MCF 10A (cell line): ENCODE measurements at regions of chr12 and their contacts with region 1.

Region 1: DNA sequence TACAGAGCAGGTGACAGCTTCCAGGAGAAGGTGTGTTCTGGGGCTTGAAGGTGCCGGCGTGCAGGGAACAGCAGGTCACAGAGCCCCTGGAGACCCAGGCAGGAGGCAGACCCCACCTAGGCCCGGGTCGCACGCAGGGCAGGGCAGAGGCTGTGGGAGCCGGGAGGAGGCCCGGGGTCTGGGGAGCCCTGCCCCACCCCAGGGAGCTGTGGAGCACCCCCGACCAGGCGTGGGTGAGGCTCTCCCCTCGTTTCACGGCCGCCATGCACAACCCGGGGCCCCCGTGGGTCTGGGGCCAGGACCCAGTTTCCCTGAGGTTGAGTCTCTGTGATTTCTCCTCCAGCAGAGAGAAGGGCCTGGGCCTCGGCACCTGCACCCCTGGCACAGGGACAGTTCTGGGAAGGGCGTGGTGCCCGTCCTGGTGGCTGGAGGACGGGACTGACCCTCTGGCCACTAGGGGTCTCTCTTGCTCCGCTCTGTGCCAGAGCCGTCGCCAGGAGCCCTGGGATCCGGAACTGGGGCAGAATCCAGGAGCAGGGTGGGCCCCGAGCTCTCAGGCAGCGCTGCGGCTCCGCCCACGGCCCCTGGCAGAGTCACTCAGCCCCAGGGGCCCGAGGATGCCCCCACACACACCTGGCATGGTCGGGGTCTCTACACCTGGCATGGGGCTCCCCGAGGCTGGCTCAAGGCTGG is 75.2 kb upstream of the FBRSL1 start:
- DNase-seq: peak; percentile 82
- H3K4me3 Mint-ChIP-seq: no peak overlapping the region
- H3K27ac Mint-ChIP-seq: no peak overlapping the region
- H3K4me1 Mint-ChIP-seq: no peaks in the 10 kb centered on the region
- H3K27me3 Mint-ChIP-seq: peaks cover 25% of the 10 kb centered on the region
- CTCF ChIP-seq: peak; percentile 90

Region 2: GRCh38 chr12:132153501-132154340 is 261.1 kb before region 1 on chr12:
- CTCF ChIA-PET with region 1: interaction called, 3 read pairs
- POLR2A ChIA-PET with region 1: no interaction called
- intact Hi-C with region 1: loop called (anchors 2 kb)
- DNase-seq: peak; percentile 71
- H3K4me3 Mint-ChIP-seq: no peak overlapping the region
- H3K27ac Mint-ChIP-seq: no peak overlapping the region
- H3K4me1 Mint-ChIP-seq: no peaks in the 10 kb centered on the region
- H3K27me3 Mint-ChIP-seq: no peaks in the 10 kb centered on the region
- CTCF ChIP-seq: peak; percentile 87

Region 3: DNA sequence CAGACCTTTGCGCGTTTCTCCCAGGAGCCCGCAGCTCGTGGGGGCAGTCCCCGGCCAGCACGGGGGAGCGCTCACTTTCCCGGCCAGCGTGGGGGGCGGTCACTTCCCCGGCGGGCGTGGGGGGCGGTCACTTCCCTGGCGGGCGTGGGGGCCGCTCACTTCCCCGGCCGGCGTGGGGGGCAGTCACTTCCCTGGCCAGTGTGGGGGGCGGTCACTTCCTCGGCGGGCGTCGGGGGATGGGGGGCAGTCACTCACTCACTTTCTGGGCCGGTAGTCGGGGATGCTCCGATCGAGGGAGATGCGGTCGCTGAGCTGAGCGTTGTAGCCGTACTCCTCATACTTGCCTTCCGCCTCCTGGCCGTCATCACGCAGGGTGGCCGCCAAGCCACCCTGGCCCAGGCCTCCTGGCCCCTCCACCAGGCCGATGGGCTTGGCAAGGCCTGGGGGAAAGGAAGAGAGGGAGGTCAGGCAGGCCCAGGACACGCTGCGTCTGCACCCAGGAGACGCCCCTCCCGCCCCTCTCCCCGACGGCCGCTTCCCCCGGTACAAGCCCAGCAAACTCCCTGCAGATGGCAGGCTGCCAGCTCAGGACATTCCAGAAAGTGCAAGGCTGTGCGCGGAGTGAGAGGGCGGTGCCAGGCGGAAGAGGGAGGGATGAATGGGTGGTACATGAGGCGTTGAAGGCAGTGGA is 128.6 kb before region 1 on chr12:
- CTCF ChIA-PET with region 1: interaction called, 5 read pairs
- POLR2A ChIA-PET with region 1: no interaction called
- intact Hi-C with region 1: loop called (anchors 5 kb)
- DNase-seq: peak; percentile 83
- H3K4me3 Mint-ChIP-seq: peak overlapping the region; percentile 42
- H3K27ac Mint-ChIP-seq: peak overlapping the region; percentile 42
- H3K4me1 Mint-ChIP-seq: peaks cover 31% of the 10 kb centered on the region
- H3K27me3 Mint-ChIP-seq: no peaks in the 10 kb centered on the region
- CTCF ChIP-seq: no peak

Region 4: DNA sequence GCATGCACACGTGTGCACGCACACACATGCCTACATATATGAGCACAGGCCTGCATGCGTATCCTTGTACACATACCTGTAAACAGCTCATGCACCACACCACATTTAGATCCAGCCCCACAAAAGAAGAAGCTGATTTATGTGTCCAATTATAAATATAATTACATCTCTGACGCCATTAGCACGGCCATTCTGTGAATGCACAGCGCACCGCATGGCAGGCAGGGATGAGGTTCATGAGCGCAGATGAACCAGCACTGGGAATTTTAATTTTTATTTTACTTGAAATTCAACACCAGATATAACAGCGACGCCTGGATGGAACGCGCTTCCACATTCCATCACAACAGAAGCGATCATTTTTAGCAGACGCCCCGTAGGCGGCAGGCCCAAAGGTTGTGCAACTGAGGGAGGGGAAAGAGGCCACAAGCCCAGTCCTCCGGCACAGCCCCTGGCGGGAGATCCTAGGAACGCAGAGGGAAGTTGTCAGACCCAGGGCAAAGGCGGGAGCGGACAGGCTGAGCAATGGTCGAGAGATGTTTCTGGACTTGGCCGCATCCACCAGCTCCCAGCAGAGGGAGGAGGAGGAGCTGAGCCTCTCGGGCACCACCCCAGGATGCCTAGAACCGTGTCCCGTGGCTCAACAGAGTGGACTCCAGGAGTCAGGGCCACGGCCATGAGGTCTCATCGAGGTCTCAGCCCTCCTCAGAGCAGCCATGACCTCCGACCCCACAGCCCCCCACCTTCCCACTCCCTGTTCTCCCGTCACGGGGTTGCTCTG is 47.5 kb before region 1 on chr12:
- CTCF ChIA-PET with region 1: no interaction called
- POLR2A ChIA-PET with region 1: no interaction called
- intact Hi-C with region 1: no loop called
- DNase-seq: peak; percentile 6
- H3K4me3 Mint-ChIP-seq: no peak overlapping the region
- H3K27ac Mint-ChIP-seq: no peak overlapping the region
- H3K4me1 Mint-ChIP-seq: no peaks in the 10 kb centered on the region
- H3K27me3 Mint-ChIP-seq: peaks cover 60% of the 10 kb centered on the region
- CTCF ChIP-seq: no peak

Region 5: DNA sequence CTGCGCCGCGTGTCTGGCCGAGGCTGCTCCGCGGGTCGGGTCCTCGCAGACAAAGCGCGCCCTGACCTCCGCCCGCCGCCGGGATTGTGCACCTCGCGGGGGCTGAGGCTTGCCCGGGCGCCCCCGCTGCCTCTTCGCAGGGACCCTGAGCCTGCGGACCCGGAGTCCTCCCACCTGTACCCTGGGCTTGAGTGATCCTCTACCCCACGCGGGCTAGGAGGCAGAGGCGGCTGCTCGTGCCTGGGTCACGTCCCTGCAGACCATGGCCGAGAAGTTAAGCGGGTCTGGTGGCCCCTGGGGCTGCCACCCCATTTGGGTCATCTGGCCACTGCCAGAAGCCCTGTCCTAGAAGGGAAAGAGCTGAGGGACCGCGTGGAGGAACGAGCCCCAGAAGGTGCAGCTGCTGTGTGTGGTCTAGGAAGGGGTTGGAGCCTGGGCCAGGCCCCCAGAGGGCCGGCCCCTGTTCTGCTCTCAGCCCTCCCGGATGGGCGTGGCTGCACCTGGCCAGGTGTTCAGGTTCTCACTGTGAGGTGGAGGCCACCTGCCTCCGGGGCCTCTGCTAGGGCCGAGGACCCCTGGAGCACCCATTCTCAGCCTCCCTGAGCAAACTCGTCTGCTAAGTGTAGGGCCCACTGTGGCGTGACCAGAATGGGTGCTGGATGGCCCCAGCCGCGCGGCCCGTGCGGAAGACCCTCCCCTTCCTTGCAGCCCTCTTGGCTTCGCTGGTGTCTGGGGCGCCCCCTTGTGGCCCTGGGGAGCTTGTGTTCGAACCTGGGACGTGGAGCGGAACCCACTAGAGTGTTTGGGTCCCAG is 146.0 kb after region 1 on chr12:
- CTCF ChIA-PET with region 1: interaction called, 21 read pairs
- POLR2A ChIA-PET with region 1: interaction called, 3 read pairs
- intact Hi-C with region 1: loop called (anchors 1 kb)
- DNase-seq: peak; percentile 67
- H3K4me3 Mint-ChIP-seq: peak overlapping the region; percentile 67
- H3K27ac Mint-ChIP-seq: no peak overlapping the region
- H3K4me1 Mint-ChIP-seq: peaks cover 5% of the 10 kb centered on the region
- H3K27me3 Mint-ChIP-seq: no peaks in the 10 kb centered on the region
- CTCF ChIP-seq: peak; percentile 85

Region 6: DNA sequence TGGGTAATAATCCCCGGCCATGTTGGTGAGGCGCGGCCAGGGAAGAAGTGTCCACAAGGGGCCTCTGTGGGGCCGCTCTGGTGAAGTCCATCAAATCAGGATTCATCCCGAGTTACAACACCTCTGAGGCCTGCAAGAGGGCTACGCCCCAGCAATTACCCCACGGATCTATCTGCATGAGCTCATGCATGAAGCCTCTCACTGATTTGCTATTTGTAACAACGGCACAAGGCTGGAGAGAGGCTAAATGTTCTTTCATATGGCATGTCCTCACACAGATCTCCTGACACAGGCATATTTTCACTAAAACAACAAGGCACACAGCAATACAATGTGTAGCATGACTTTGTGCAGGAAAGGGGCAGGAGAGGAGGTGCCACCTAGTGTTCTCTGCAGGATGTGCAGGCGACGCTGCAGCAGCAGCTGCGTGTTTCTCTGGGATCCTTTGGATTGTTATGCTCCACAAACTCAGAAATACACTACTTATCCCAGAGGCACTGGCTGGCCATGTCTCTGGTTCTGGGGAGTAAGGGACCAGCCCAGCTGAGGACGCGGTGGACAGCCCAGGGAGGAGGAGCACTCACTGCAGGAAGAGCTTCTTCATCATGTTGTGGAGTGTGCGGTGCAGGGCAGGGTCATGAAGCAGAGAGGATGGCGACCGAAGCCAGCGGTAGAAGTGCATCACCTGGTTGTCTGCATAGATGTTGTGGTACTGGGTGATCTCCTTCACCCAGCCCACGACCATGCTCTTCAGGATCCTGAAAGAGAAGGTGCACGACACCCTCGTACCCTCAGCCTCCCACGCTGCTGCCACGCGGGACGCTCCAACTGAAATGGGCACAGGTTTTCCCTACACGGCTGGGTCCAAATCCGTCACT is 224.0 kb after region 1 on chr12:
- CTCF ChIA-PET with region 1: interaction called, 22 read pairs
- POLR2A ChIA-PET with region 1: no interaction called
- intact Hi-C with region 1: no loop called
- DNase-seq: peak; percentile 29
- H3K4me3 Mint-ChIP-seq: no peak overlapping the region
- H3K27ac Mint-ChIP-seq: no peak overlapping the region
- H3K4me1 Mint-ChIP-seq: no peaks in the 10 kb centered on the region
- H3K27me3 Mint-ChIP-seq: no peaks in the 10 kb centered on the region
- CTCF ChIP-seq: peak; percentile 76